ENCODE measurements at regions of chr10 and their contacts with region 1.

Region 1: DNA sequence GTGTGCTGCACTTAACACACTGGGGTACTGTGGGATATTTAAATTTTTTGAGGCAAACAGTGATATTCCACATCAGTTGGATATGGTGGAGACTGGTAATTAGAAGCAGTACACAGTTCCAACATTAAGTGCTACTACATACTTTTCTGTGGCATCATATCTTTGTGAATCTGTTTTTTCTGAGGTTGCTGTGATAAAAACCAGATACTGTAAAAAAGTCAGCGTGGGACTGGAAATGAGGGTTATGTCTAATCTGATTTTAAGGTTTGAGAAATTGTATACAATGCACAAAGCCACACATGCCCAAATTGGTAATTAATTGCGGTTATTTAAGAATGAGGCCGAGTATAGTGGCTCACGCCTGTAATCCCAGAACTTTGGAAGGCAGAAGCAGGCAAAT is 41.2 kb downstream of the TBC1D12 start:
- DNase-seq: no peak
- ATAC-seq: no peak
- H3K4me3 Mint-ChIP-seq: no peak overlapping the region
- H3K27ac Mint-ChIP-seq: no peak overlapping the region
- H3K4me1 Mint-ChIP-seq: no peaks in the 10 kb centered on the region
- H3K27me3 Mint-ChIP-seq: no peaks in the 10 kb centered on the region
- CTCF ChIP-seq: no peak

Region 2: GRCh38 chr10:93916257-93917063 is 527.1 kb before region 1 on chr10:
- CTCF ChIA-PET with region 1: interaction called, 18 read pairs
- POLR2A ChIA-PET with region 1: no interaction called
- DNase-seq: no peak
- ATAC-seq: peak; percentile 61
- H3K4me3 Mint-ChIP-seq: peak overlapping the region; percentile 41
- H3K27ac Mint-ChIP-seq: no peak overlapping the region
- H3K4me1 Mint-ChIP-seq: peaks cover 11% of the 10 kb centered on the region
- H3K27me3 Mint-ChIP-seq: no peaks in the 10 kb centered on the region
- CTCF ChIP-seq: no peak

Region 3: GRCh38 chr10:94287336-94287735 is 156.2 kb before region 1 on chr10:
- CTCF ChIA-PET with region 1: interaction called, 14 read pairs
- POLR2A ChIA-PET with region 1: no interaction called
- DNase-seq: no peak
- ATAC-seq: no peak
- H3K4me3 Mint-ChIP-seq: no peak overlapping the region
- H3K27ac Mint-ChIP-seq: no peak overlapping the region
- H3K4me1 Mint-ChIP-seq: peaks cover 19% of the 10 kb centered on the region
- H3K27me3 Mint-ChIP-seq: no peaks in the 10 kb centered on the region; the same call in 1 of the 2 replicates
- CTCF ChIP-seq: no peak

Region 4: DNA sequence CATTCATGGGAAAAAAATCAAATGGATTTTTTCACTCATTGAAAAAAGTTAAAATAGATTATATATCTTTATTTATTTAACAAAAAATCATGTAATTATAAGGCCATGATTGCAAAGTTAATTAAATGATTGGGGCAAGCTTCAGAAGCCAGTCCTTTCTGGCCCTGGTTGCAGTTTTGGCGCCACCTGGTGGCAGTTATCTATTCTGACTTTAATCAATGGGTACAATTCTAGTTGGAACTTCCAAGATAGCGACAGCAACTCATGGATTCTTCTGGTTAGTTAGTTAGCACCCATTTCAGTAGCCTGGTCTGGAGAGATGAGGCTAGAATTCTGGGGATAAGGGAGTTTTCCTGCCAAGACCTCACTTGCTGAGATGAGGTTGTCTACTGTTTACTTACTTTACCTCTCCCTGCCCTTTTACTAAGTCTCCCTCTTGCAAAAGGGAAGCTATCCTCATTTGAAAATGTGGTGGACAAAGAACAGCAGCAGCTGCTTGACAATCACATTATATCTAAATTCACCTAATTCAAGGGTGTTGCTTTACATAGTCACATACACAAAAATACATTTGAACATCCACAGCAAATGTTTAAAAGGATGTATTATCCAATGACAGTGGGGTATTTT is 123.1 kb before region 1 on chr10:
- CTCF ChIA-PET with region 1: interaction called, 22 read pairs
- POLR2A ChIA-PET with region 1: no interaction called
- DNase-seq: peak; percentile 72
- ATAC-seq: peak; percentile 72
- H3K4me3 Mint-ChIP-seq: no peak overlapping the region
- H3K27ac Mint-ChIP-seq: no peak overlapping the region
- H3K4me1 Mint-ChIP-seq: no peaks in the 10 kb centered on the region
- H3K27me3 Mint-ChIP-seq: no peaks in the 10 kb centered on the region
- CTCF ChIP-seq: peak; percentile 70

Region 5: GRCh38 chr10:94383530-94383929 is 60.0 kb before region 1 on chr10:
- CTCF ChIA-PET with region 1: interaction called, 16 read pairs
- POLR2A ChIA-PET with region 1: no interaction called
- DNase-seq: no peak
- ATAC-seq: no peak
- H3K4me3 Mint-ChIP-seq: no peak overlapping the region
- H3K27ac Mint-ChIP-seq: no peak overlapping the region
- H3K4me1 Mint-ChIP-seq: 0 out of 2 replicates have a peak, but pooled peaks cover 3% of the 10 kb centered on the region
- H3K27me3 Mint-ChIP-seq: peaks cover 8% of the 10 kb centered on the region; the same call in 1 of the 2 replicates
- CTCF ChIP-seq: no peak

Region 6: GRCh38 chr10:94409021-94409657 is 34.4 kb before region 1 on chr10:
- CTCF ChIA-PET with region 1: interaction called, 16 read pairs
- POLR2A ChIA-PET with region 1: no interaction called
- DNase-seq: no peak
- ATAC-seq: peak; percentile 52
- H3K4me3 Mint-ChIP-seq: no peak overlapping the region
- H3K27ac Mint-ChIP-seq: no peak overlapping the region
- H3K4me1 Mint-ChIP-seq: peaks cover 4% of the 10 kb centered on the region
- H3K27me3 Mint-ChIP-seq: peaks cover 25% of the 10 kb centered on the region
- CTCF ChIP-seq: no peak

Measured in WTC11 (cell line).